Left lung (tissue), 14 donors: ENCODE measurements at regions of chr19 and their contacts with region 1.

Region 1: DNA sequence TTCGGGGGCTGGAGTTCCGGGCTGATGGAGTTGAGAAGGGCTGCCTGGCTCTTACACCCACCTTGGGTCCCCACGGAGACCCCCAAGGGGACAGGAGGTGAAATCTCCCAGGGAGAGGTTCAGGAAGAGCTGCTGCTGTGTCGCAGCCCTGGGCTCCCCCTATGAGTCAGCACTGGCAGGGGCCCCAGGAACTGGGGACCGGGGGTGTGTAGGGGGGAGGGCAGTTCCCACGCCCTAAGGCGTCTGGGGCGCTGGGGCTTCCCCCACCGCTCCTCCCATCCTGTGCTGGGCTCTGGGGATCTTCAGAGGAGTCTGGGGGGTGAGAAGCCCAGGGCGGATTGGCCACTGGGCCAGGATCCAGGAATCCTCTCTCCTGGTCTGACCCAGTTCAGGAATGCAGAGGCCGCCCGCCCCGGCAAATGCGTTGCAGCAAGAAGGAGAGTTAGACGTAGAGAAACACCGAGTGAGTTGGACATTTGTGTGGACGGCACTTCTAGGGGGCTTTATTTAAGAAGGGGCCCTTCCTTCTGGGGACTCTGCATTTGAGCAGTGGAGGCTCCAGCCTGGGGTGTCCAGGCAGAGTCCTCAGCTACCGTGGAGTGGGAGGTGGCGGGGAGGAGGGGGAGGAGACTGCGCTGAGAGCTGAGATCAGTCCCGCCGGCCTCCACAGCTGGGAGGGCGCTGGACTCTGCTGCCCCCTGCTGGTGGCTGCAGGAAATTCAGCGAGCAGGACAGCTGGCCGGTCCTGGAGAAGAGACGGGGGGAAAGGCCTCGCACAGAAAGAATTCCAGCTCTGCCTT is 15.0 kb upstream of the NANOS3 start:
- DNase-seq: peak; percentile 93 to 98 (median 96)
- ATAC-seq: peak; percentile 94
- H3K4me3 ChIP-seq: peak overlapping the region; percentile 16 to 46
- H3K27ac ChIP-seq: peak overlapping the region; percentile 88 to 95
- H3K4me1 ChIP-seq: peaks cover 15 to 57% of the 10 kb centered on the region in 2 donors
- H3K27me3 ChIP-seq: peaks cover 0 to 32% of the 10 kb centered on the region in 2 donors
- CTCF ChIP-seq: peak; percentile 97 to 98

Region 2: DNA sequence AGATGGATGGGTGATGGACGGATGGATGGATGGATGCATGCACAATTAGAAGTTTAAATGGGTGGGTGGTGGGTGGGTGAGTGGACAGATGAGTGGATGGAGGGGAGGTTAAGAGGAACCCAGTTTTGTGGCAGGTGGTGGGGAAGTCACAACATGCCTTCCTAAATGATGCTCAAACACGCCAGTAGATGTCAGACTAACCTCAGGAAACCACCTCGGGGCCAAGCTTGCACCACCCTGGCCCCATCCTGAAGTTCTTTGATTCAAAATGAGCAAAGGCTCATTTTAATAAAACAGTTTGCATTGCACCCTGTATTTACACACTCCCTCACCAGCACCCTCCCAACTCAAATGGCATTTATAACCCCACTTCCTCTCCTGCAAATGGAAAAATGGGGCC is 264.3 kb before region 1 on chr19:
- intact Hi-C with region 1: loop called in 1 of 2 experiments (anchors 10 kb)
- DNase-seq: peak in 2 of 4 donors; percentile 26 to 70
- ATAC-seq: peak; percentile 92
- H3K4me3 ChIP-seq: no peak overlapping the region
- H3K27ac ChIP-seq: no peak overlapping the region
- H3K4me1 ChIP-seq: no peaks in the 10 kb centered on the region
- H3K27me3 ChIP-seq: peaks cover 0 to 16% of the 10 kb centered on the region in 2 donors
- CTCF ChIP-seq: peak; percentile 45 to 59

Region 3: GRCh38 chr19:13718733-13719132 is 143.2 kb before region 1 on chr19:
- intact Hi-C with region 1: no loop called
- DNase-seq: peak in 1 of 4 donors; percentile 5
- ATAC-seq: no peak
- H3K4me3 ChIP-seq: no peak overlapping the region
- H3K27ac ChIP-seq: no peak overlapping the region
- H3K4me1 ChIP-seq: no peaks in the 10 kb centered on the region
- H3K27me3 ChIP-seq: peaks cover 0 to 16% of the 10 kb centered on the region in 2 donors
- CTCF ChIP-seq: no peak

Region 4: GRCh38 chr19:13774217-13775191 is 87.4 kb before region 1 on chr19 and contains the start of gene C19orf53:
- intact Hi-C with region 1: loop called in 1 of 2 experiments (anchors 10 kb)
- DNase-seq: peak; percentile 88 to 96 (median 93)
- ATAC-seq: peak; percentile 99
- H3K4me3 ChIP-seq: peak within 1 kb of the TSS; percentile 81 to 83
- H3K27ac ChIP-seq: peak within 1 kb of the TSS; percentile 74 to 84
- H3K4me1 ChIP-seq: peaks cover 7 to 20% of the 10 kb centered on the region in 2 donors
- H3K27me3 ChIP-seq: no peaks in the 10 kb centered on the region
- CTCF ChIP-seq: no peak
- polyA plus RNA-seq, gene C19orf53: 78.2 to 116 (median 103) TPM

Region 5: GRCh38 chr19:13784731-13785452 is 77.0 kb before region 1 on chr19:
- intact Hi-C with region 1: loop called in 1 of 2 experiments (anchors 5 kb)
- DNase-seq: peak in 3 of 4 donors; percentile 74 to 92 (median 79)
- ATAC-seq: peak; percentile 73
- H3K4me3 ChIP-seq: no peak overlapping the region
- H3K27ac ChIP-seq: peak overlapping the region in 1 of 2 donors; percentile 11
- H3K4me1 ChIP-seq: peaks cover 13 to 69% of the 10 kb centered on the region in 2 donors
- H3K27me3 ChIP-seq: no peaks in the 10 kb centered on the region
- CTCF ChIP-seq: peak; percentile 61 to 76